ENCODE measurements at regions of chr6 and their contacts with region 1.

Region 1: GRCh38 chr6:110958329-110959192 is at the start of gene GTF3C6:
- DNase-seq: peak; percentile 96
- ATAC-seq: peak; percentile 99
- H3K4me3 Mint-ChIP-seq: peak within 1 kb of the TSS; percentile 98
- H3K27ac Mint-ChIP-seq: peak within 1 kb of the TSS; percentile 100
- H3K4me1 Mint-ChIP-seq: peaks cover 18% of the 10 kb centered on the region
- H3K27me3 Mint-ChIP-seq: no peaks in the 10 kb centered on the region
- total RNA-seq, gene GTF3C6: 93.9 to 99.8 TPM

Region 2: DNA sequence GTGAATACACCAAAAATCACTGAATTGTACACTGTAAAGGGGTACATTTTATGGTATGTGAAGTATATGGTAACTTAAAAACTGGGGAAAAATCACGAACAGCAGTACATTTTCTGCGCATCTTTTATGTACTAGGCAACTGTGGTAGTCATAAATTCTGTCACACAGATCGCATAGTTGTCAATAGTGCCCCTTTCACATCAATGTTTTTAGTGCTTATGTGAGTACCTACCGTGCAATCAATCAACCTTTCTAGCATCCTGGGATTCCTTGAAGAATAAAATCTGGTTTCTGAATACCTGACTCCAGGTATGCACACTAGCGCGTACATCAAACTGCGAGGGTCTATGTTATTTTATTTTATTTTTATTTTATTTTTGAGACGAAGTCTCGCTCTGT is 22.6 kb after region 1 on chr6:
- CTCF ChIA-PET with region 1: interaction called, 5 read pairs
- POLR2A ChIA-PET with region 1: interaction called, 34 read pairs
- DNase-seq: no peak
- ATAC-seq: peak; percentile 1
- H3K4me3 Mint-ChIP-seq: peak overlapping the region; percentile 97
- H3K27ac Mint-ChIP-seq: peak overlapping the region; percentile 99
- H3K4me1 Mint-ChIP-seq: peaks cover 32% of the 10 kb centered on the region
- H3K27me3 Mint-ChIP-seq: no peaks in the 10 kb centered on the region

Measured in activated CD8-positive, alpha-beta T cell treated with anti-CD3 and anti-CD28 coated beads, Interleukin-2, amount 10 ng/mL, durations not matched to agents 7 days and 5 days (primary cell).